Activated B cell treated with CpG ODN at 0.5 μM for 24 hours (primary cell): ENCODE measurements at regions of chrX and their contacts with region 1.

Region 1: DNA sequence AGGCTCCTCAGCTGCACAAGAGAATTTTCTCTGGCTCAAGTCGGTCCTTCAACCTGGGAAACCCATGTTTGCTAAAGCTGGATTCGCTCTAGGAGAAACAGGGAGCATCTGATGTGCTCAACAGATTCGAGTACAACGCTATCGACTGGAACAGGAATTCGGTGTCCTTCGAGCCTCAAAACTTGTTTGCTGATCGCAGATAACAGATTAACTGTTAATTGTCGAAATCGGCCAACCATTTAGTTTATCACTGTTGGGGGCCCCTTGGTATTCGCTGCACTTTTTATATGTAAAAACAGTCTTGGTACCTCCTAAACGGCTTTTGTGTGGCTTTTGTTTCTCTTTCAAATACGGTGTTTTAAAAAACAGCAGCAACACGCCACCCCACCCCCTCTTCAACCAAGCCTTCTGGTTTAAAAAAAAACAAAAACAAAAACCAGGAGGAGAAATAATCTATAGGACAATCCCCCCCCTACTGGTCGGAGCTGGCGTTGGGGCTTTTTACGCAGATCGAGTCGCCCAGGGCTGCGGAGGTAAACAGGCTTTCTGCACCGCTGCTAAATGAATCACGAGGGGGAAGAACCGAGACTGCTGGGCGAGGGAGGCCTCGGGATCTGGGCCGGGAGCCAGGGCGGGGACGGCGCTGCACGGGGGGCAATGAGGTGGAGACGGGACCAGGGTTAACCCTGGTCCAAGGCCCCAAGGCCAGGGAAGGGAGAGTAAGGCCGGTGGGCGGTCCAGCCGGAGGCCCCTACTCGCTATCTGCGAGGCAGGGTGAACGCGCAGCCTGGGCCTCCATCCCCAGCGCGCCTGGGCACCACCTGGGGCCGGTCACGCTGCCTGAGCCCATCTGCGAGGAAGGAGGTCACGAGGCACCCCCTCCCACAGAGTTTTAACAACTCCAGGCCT is 71.7 kb upstream of the BCOR start:
- DNase-seq: peak; percentile 63
- ATAC-seq: peak; percentile 59
- H3K4me3 Mint-ChIP-seq: peak overlapping the region; percentile 88
- H3K27ac Mint-ChIP-seq: peak overlapping the region; percentile 98
- H3K4me1 Mint-ChIP-seq: peaks cover 69% of the 10 kb centered on the region
- H3K27me3 Mint-ChIP-seq: no peaks in the 10 kb centered on the region
- CTCF ChIP-seq: no peak

Region 2: GRCh38 chrX:38803586-38804431 is 1365.6 kb before region 1 on chrX:
- CTCF ChIA-PET with region 1: no interaction called
- POLR2A ChIA-PET with region 1: interaction called, 4 read pairs
- intact Hi-C with region 1: loop called (anchors 2 kb)
- DNase-seq: peak; percentile 55
- ATAC-seq: peak; percentile 63
- H3K4me3 Mint-ChIP-seq: peak overlapping the region; percentile 89
- H3K27ac Mint-ChIP-seq: peak overlapping the region; percentile 80
- H3K4me1 Mint-ChIP-seq: peaks cover 39% of the 10 kb centered on the region
- H3K27me3 Mint-ChIP-seq: no peaks in the 10 kb centered on the region
- CTCF ChIP-seq: no peak

Region 3: GRCh38 chrX:39730662-39731397 is 438.6 kb before region 1 on chrX:
- CTCF ChIA-PET with region 1: interaction called, 4 read pairs
- POLR2A ChIA-PET with region 1: no interaction called
- intact Hi-C with region 1: loop called (anchors 5 kb)
- DNase-seq: no peak
- ATAC-seq: peak; percentile 64
- H3K4me3 Mint-ChIP-seq: peak overlapping the region; percentile 53
- H3K27ac Mint-ChIP-seq: no peak overlapping the region
- H3K4me1 Mint-ChIP-seq: peaks cover 5% of the 10 kb centered on the region
- H3K27me3 Mint-ChIP-seq: peaks cover 8% of the 10 kb centered on the region
- CTCF ChIP-seq: no peak

Region 4: DNA sequence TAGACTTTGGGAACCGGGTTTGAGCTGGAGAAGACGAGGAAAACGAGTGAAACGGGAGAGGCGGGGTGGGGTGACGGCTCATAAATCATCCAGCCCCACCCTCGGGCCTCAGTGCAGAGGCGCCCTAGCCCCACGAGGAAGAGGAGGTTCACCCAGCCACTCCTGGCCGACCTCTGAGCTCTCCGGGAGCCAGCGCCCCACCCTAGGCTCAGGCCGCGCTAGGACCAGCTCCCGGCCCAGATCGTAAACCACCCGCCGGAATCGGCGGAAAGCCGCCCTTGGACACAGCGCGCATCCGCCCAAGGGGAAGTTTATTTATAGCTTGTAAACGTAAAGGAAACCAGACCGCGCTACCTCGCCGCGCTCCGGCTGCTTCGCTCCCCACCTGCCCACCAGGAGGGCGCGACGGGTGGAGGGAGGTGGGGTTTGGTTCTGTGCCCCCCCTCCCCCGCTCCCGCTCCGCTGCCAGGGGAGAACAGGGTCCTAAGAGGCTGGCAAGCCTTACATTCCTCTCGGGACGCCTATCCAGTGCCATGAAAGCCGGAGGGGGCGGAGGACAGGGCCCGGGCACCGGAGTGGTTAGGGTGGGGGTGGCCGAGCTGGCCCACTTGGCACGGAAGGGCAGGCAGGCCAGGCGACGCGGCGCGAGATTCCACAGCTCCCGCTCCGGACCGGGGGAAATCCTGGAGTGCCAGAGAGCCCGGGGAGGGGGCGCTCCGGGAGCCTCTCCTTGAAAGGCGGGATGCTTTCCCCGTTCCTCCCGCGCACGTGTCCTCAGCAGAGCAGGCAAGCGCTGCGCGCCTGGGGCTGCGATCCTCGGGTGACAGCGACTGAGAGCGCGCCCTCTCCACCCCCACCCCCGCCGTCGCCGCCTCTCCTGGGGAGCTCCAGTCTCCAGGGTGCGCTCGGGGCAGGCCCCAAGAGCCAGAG is 155.9 kb before region 1 on chrX:
- CTCF ChIA-PET with region 1: no interaction called
- POLR2A ChIA-PET with region 1: interaction called, 10 read pairs
- intact Hi-C with region 1: loop called (anchors 1 kb)
- DNase-seq: peak; percentile 41
- ATAC-seq: peak; percentile 47
- H3K4me3 Mint-ChIP-seq: peak overlapping the region; percentile 76
- H3K27ac Mint-ChIP-seq: peak overlapping the region; percentile 56
- H3K4me1 Mint-ChIP-seq: peaks cover 26% of the 10 kb centered on the region
- H3K27me3 Mint-ChIP-seq: no peaks in the 10 kb centered on the region
- CTCF ChIP-seq: no peak

Region 5: GRCh38 chrX:40153335-40154249 is 15.9 kb before region 1 on chrX:
- CTCF ChIA-PET with region 1: interaction called, 4 read pairs
- POLR2A ChIA-PET with region 1: interaction called, 72 read pairs
- intact Hi-C with region 1: loop called (anchors 1 kb)
- DNase-seq: peak; percentile 57
- ATAC-seq: peak; percentile 76
- H3K4me3 Mint-ChIP-seq: peak overlapping the region; percentile 80
- H3K27ac Mint-ChIP-seq: peak overlapping the region; percentile 77
- H3K4me1 Mint-ChIP-seq: peaks cover 38% of the 10 kb centered on the region
- H3K27me3 Mint-ChIP-seq: no peaks in the 10 kb centered on the region
- CTCF ChIP-seq: no peak

Region 6: GRCh38 chrX:40298572-40299479 is 129.4 kb after region 1 on chrX:
- CTCF ChIA-PET with region 1: no interaction called
- POLR2A ChIA-PET with region 1: interaction called, 4 read pairs
- intact Hi-C with region 1: loop called (anchors 2 kb)
- DNase-seq: no peak
- ATAC-seq: no peak
- H3K4me3 Mint-ChIP-seq: no peak overlapping the region
- H3K27ac Mint-ChIP-seq: peak overlapping the region; percentile 63
- H3K4me1 Mint-ChIP-seq: peaks cover 32% of the 10 kb centered on the region
- H3K27me3 Mint-ChIP-seq: no peaks in the 10 kb centered on the region
- CTCF ChIP-seq: no peak

Region 7: GRCh38 chrX:40647307-40648197 is 478.1 kb after region 1 on chrX and contains the start of gene CXorf38:
- CTCF ChIA-PET with region 1: no interaction called
- POLR2A ChIA-PET with region 1: no interaction called
- intact Hi-C with region 1: loop called (anchors 2 kb)
- DNase-seq: peak; percentile 83
- ATAC-seq: peak; percentile 67
- H3K4me3 Mint-ChIP-seq: peak within 1 kb of the TSS; percentile 94
- H3K27ac Mint-ChIP-seq: peak within 1 kb of the TSS; percentile 93
- H3K4me1 Mint-ChIP-seq: peaks cover 39% of the 10 kb centered on the region
- H3K27me3 Mint-ChIP-seq: no peaks in the 10 kb centered on the region
- CTCF ChIP-seq: no peak
- total RNA-seq, gene CXorf38: 20.9 and 21.9 TPM in 2 replicates